GM23248 (cell line): ENCODE measurements at regions of chr13 and their contacts with region 1.

Region 1: GRCh38 chr13:37074703-37075102 is 15.2 kb upstream of the SUPT20H start:
- DNase-seq: peak; percentile 62
- H3K4me3 ChIP-seq: no peak overlapping the region
- H3K27ac ChIP-seq: no peak overlapping the region
- H3K4me1 ChIP-seq: no peaks in the 10 kb centered on the region
- H3K27me3 ChIP-seq: no peaks in the 10 kb centered on the region

Region 2: DNA sequence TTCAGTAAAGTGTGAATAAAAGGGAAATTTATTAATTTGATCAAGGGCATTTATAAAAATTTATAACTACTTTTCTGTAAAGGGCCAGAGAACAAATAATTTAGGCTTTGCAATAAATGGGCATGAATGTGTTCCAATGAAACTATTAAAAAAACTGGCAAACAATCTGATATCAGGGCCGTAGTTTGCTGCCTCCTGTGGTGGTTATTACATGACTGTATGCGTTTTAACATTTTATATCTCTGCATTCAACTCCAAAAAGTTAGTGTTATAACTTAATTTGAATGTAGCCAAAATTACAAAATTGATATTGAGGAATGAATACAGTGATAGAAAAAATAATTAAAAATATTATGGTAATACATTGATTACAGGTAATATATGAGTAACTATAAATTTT is 604.3 kb after region 1 on chr13:
- in situ Hi-C with region 1: no loop called
- DNase-seq: no peak
- H3K4me3 ChIP-seq: no peak overlapping the region
- H3K27ac ChIP-seq: no peak overlapping the region
- H3K4me1 ChIP-seq: peaks cover 12% of the 10 kb centered on the region
- H3K27me3 ChIP-seq: no peaks in the 10 kb centered on the region

Region 3: GRCh38 chr13:38223089-38223488 is 1148.4 kb after region 1 on chr13:
- in situ Hi-C with region 1: loop called (anchors 25 kb)
- DNase-seq: peak; percentile 35
- H3K4me3 ChIP-seq: no peak overlapping the region
- H3K27ac ChIP-seq: no peak overlapping the region
- H3K4me1 ChIP-seq: no peaks in the 10 kb centered on the region
- H3K27me3 ChIP-seq: no peaks in the 10 kb centered on the region

Region 4: GRCh38 chr13:38530492-38530891 is 1455.8 kb after region 1 on chr13:
- in situ Hi-C with region 1: loop called (anchors 25 kb)
- DNase-seq: peak; percentile 69
- H3K4me3 ChIP-seq: no peak overlapping the region
- H3K27ac ChIP-seq: no peak overlapping the region
- H3K4me1 ChIP-seq: no peaks in the 10 kb centered on the region
- H3K27me3 ChIP-seq: no peaks in the 10 kb centered on the region